IMR-90 (cell line): ENCODE measurements at regions of chr10 and their contacts with region 1.

Region 1: DNA sequence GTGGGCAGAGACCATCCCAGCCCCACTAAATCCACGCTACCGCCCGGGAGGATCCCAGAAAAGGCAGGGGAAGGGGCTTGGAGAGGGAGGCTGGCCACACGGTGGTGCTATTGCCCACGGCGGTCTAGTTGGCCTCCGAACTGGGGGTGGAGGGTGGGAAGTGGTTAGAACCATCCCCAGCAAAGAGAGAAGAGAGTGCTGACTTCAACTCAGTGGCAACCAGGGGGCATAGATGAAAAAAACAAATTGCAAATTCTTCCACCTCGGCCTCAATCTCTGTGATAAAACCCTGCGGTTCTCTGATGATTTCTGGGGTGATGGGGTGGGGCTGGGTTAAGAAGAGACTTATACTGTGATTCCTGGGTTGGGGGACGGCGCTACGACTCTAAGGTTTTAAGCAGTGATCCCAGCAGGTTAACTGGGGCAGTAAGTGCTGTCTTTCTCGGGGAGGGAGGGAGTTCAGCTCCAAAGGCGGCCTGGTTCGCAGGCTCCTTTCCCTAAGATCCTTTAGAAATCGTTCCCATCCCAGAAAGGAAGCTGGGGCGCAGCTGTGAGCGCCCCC is 154.5 kb upstream of the LYZL2 start:
- DNase-seq: peak; percentile 89
- ATAC-seq: peak; percentile 83
- H3K4me3 ChIP-seq: 0 out of 2 replicates have a peak overlapping the region, but pooled peaks have one; percentile 1
- H3K27ac ChIP-seq: peak overlapping the region; percentile 94
- H3K4me1 ChIP-seq: peaks cover 22% of the 10 kb centered on the region
- H3K27me3 ChIP-seq: no peaks in the 10 kb centered on the region
- CTCF ChIP-seq: peak; percentile 95
- POLR2A ChIP-seq: peak; percentile 55; the same call in 1 of the 2 replicates
- RAD21 ChIP-seq: peak; percentile 96

Region 2: GRCh38 chr10:30751678-30752331 is 32.2 kb before region 1 on chr10:
- CTCF ChIA-PET with region 1: interaction called, 8 read pairs
- POLR2A ChIA-PET with region 1: no interaction called
- dilution Hi-C with region 1: no loop called
- in situ Hi-C with region 1: no loop called
- intact Hi-C with region 1: loop called (anchors 1 kb)
- DNase-seq: peak; percentile 75
- ATAC-seq: peak; percentile 92
- H3K4me3 ChIP-seq: no peak overlapping the region
- H3K27ac ChIP-seq: peak overlapping the region; percentile 2; the same call in 1 of the 2 replicates
- H3K4me1 ChIP-seq: peaks cover 16% of the 10 kb centered on the region
- H3K27me3 ChIP-seq: no peaks in the 10 kb centered on the region
- CTCF ChIP-seq: peak; percentile 98
- POLR2A ChIP-seq: peak; percentile 55
- RAD21 ChIP-seq: peak; percentile 100

Region 3: DNA sequence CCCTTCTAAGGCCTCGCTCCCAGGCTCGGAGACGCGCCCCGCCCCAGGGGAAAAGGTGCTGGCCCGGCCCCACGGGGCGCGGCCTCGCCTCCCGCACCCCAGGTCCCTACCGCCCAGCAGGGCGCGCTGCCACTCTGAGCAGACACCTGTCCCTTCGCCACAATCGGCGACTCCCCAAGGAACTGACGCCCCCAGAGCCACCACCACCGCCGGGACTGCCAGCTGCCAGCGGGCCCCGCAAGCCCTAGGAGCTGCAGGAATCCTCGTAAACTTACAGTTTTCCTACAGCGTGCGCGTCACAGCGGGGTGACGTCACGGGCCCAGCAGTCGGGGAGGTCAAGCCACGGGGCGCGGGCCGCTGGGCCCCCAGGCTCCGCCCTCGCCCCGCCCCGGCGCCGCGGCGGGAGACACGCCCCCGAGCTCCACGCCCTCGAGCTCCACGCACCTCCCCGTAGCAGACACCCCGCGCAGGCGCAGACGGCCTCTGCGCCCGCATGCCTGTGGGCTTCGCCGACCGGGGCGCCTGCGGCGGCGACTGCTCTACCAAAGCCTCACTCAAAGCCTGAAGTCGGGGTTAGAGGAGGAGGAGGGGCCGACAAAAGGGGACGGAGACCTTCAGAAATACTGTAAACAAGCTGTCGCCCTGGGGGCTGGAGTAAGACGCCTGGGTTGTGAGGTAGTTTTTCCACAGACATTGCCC is 247.7 kb after region 1 on chr10 and contains the start of gene ZNF438:
- CTCF ChIA-PET with region 1: no interaction called
- POLR2A ChIA-PET with region 1: interaction called, 8 read pairs
- dilution Hi-C with region 1: no loop called
- in situ Hi-C with region 1: loop called (anchors 5 kb)
- intact Hi-C with region 1: loop called (anchors 1 kb)
- DNase-seq: peak; percentile 95
- ATAC-seq: peak; percentile 92
- H3K4me3 ChIP-seq: peak within 1 kb of the TSS; percentile 75
- H3K27ac ChIP-seq: peak within 1 kb of the TSS; percentile 96
- H3K4me1 ChIP-seq: peaks cover 14% of the 10 kb centered on the region
- H3K27me3 ChIP-seq: no peaks in the 10 kb centered on the region
- CTCF ChIP-seq: peak; percentile 53
- POLR2A ChIP-seq: peak; percentile 74; the same call in 1 of the 2 replicates
- RAD21 ChIP-seq: peak; percentile 60
- total RNA-seq, gene ZNF438: 2.8 and 2.9 TPM in 2 replicates

Region 4: DNA sequence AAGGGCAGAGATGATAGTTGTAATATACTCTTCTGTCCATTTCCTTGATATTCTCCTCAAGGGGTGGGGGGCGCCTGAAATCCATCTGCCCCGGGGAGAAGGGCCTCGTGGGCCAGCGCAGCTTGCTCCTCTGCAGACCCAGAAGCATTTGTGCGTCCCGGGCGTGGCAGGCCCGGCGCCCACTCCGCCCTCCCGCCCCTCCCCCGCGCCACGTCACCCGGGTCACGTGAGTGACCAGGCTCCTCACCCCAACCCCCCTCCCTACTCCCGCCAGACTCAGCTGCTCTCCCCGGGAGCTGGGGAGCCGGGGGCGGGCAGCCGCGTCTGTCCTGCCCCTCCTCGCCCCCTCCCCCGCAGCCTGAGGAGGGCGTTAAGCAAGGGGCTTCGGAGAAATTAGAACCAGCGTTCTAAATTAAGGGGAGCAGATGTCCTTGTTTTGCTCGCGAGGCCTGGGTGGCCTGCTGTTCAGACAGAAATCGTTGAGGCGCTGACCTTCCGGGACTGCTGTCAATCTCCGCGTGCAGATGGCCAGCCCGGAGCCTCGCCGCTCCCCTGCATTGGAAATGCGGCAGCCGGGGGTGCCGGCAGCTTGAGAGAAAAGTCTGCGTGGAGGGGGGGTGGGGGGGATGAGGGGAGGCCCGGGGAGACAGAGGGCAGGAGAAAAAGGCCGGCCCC is 349.7 kb after region 1 on chr10:
- CTCF ChIA-PET with region 1: no interaction called
- POLR2A ChIA-PET with region 1: interaction called, 6 read pairs
- dilution Hi-C with region 1: no loop called
- in situ Hi-C with region 1: loop called (anchors 10 kb)
- intact Hi-C with region 1: loop called (anchors 2 kb)
- DNase-seq: peak; percentile 65
- ATAC-seq: peak; percentile 48
- H3K4me3 ChIP-seq: no peak overlapping the region
- H3K27ac ChIP-seq: peak overlapping the region; percentile 100
- H3K4me1 ChIP-seq: peaks cover 24% of the 10 kb centered on the region
- H3K27me3 ChIP-seq: no peaks in the 10 kb centered on the region
- CTCF ChIP-seq: no peak
- POLR2A ChIP-seq: 0 out of 2 replicates have a peak, but pooled peaks have one; percentile 10
- RAD21 ChIP-seq: no peak

Region 5: DNA sequence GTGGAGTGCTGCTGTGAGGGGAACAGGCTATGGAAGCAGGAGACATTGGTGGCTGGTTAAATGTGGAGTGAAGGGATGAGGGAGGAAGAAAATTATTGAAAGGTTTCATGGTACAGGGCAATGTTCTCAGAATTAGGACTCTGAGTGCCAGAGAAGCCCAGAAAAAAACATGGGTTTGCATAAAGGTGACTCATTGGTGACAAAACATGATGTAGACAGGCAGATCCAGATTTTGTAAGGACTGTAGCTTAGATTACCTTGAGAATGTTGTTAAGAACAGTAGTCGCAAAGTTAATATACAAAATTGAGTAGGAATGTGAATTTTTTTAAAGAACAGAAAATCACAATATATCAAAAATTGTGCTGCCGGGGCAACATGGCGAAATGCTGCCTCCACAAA is 382.6 kb after region 1 on chr10:
- CTCF ChIA-PET with region 1: no interaction called
- POLR2A ChIA-PET with region 1: interaction called, 10 read pairs
- dilution Hi-C with region 1: no loop called
- in situ Hi-C with region 1: no loop called
- intact Hi-C with region 1: no loop called
- DNase-seq: peak; percentile 28
- ATAC-seq: no peak
- H3K4me3 ChIP-seq: no peak overlapping the region
- H3K27ac ChIP-seq: no peak overlapping the region
- H3K4me1 ChIP-seq: peaks cover 2% of the 10 kb centered on the region; the same call in 1 of the 2 replicates
- H3K27me3 ChIP-seq: no peaks in the 10 kb centered on the region
- CTCF ChIP-seq: no peak
- POLR2A ChIP-seq: no peak
- RAD21 ChIP-seq: no peak

Region 6: DNA sequence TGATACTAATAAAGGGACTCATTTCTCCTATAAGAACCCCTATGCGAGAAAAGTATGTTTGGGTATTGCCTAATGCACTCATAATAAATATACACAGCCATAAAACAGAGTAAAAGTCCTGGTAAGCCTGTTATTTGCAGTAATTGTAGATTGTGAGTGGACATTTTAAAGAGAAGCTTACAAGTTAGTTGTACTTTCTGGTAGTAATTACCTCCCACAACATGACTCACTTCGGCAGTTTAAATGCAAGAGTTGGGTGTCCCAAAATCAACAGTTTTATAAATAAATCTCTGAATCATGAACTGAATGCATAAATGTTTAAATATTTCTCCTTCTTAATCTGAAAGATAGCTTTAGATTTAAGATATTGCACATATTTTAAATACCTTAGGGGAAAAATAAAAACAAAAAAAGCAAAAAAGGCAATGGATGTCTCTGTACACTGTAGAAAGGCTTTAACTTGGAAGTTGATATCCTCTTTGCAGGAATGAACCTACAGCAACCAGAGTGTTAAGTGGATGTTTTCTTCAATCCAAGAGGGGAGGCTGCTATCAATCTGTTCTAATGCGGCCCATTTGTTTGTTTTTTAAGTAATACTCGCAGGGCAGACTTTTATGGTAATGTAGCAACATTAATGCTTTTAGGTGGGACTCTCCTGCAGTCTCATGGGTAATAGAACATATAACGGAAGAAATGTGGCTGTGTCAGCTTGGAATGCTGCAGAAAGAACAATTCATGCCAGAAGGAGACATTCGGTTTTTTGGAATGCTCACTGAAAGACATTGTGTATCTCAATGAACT is 477.7 kb after region 1 on chr10:
- CTCF ChIA-PET with region 1: no interaction called
- POLR2A ChIA-PET with region 1: no interaction called
- dilution Hi-C with region 1: no loop called
- in situ Hi-C with region 1: no loop called
- intact Hi-C with region 1: loop called (anchors 2 kb)
- DNase-seq: peak; percentile 94
- ATAC-seq: peak; percentile 83
- H3K4me3 ChIP-seq: no peak overlapping the region; the same call in 1 of the 2 replicates
- H3K27ac ChIP-seq: peak overlapping the region; percentile 88
- H3K4me1 ChIP-seq: peaks cover 21% of the 10 kb centered on the region
- H3K27me3 ChIP-seq: no peaks in the 10 kb centered on the region
- CTCF ChIP-seq: no peak
- POLR2A ChIP-seq: no peak
- RAD21 ChIP-seq: no peak; the same call in 1 of the 2 replicates

Region 7: GRCh38 chr10:31479752-31480151 is 695.7 kb after region 1 on chr10:
- CTCF ChIA-PET with region 1: no interaction called
- POLR2A ChIA-PET with region 1: no interaction called
- dilution Hi-C with region 1: no loop called
- in situ Hi-C with region 1: no loop called
- intact Hi-C with region 1: loop called (anchors 10 kb)
- DNase-seq: peak; percentile 6
- ATAC-seq: no peak
- H3K4me3 ChIP-seq: no peak overlapping the region
- H3K27ac ChIP-seq: no peak overlapping the region
- H3K4me1 ChIP-seq: peaks cover 2% of the 10 kb centered on the region; the same call in 1 of the 2 replicates
- H3K27me3 ChIP-seq: no peaks in the 10 kb centered on the region
- CTCF ChIP-seq: no peak
- POLR2A ChIP-seq: no peak
- RAD21 ChIP-seq: no peak